ENCODE measurements at regions of chr5 and their contacts with region 1.

Region 1: DNA sequence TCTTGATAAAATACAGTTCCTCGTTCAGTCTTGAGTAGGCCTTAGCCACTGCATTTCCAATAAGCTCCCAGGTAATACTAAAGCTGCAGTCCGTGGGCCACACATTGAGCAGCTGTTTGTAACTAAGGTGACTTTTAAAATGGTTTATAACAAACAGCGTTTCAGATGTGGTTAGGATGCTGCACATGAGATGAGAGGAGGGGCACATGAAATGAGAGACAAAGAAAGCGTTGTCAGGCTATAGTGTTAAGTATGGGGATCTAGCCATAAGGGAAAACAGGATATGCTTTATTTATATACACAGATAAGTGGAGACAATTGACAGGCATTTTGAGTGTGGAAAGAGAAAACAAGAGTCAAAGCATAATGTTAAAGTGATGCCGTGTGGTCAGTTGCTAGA is 89.9 kb downstream of the PAM start:
- DNase-seq: no peak
- CTCF ChIP-seq: no peak

Region 2: DNA sequence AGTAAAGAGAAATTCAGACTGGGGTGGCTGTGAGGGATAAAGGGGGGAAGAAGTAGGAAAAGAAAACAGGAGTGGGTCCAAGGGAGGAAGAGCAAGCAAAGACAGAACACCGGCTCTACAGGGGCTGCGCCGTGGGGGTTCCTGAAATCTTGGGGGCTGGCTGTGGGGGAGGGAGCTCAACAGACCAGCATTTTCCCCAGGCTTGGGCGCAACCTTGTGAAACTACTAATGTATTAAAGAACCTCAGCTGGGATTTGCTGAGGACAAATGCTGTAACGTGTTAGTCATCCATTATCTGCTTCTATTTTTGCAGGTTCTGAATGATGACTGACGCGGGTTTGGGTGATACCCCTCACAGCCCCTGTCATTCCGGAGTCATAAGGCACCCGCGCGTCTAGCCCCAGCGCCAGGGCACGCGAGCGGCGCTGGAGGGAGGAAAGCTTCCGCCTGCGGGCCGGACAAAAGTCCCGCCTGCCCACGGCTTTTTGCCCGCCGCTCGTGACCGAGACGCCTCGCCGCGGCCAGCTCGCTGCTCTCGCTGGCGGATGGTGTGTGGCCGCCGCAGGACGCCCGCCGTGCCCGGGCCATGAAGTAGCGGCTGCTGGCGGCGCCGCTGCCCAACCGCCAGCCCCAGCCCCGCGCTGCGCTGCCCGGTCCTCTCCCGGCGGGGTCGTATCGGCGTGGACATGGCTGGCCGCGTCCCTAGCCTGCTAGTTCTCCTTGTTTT is 20.6 kb after region 1 on chr5:
- CTCF ChIA-PET with region 1: interaction called, 13 read pairs
- POLR2A ChIA-PET with region 1: no interaction called
- DNase-seq: peak; percentile 55
- CTCF ChIP-seq: no peak

Measured in GM10248 (cell line).